GM12878 (cell line): ENCODE measurements at regions of chr1 and their contacts with region 1.

Region 1: GRCh38 chr1:25128121-25128621 is 104.1 kb downstream of the SYF2 start:
- DNase-seq: no peak
- ATAC-seq: peak; percentile 93
- H3K4me3 ChIP-seq: peak overlapping the region; percentile 5; the same call in 1 of the 2 replicates
- H3K27ac ChIP-seq: peak overlapping the region; percentile 35
- H3K4me1 ChIP-seq: peaks cover 16% of the 10 kb centered on the region
- H3K27me3 ChIP-seq: 0 out of 4 replicates have a peak, but pooled peaks cover 0 to 2% of the 10 kb centered on the region in 2 experiments
- CTCF ChIP-seq: no peak
- EP300 ChIP-seq: no peak
- POLR2A ChIP-seq: no peak
- RAD21 ChIP-seq: no peak

Region 2: GRCh38 chr1:25140073-25140797 is 12.1 kb after region 1 on chr1:
- CTCF ChIA-PET with region 1: interaction called, 6 read pairs
- POLR2A ChIA-PET with region 1: interaction called, 16 read pairs
- RAD21 ChIA-PET with region 1: interaction called, 11 read pairs
- SMC1A ChIA-PET with region 1: interaction called, 17 read pairs
- in situ Hi-C with region 1: no loop called
- intact Hi-C with region 1: no loop called
- DNase-seq: peak; percentile 69
- ATAC-seq: peak; percentile 97
- H3K4me3 ChIP-seq: no peak overlapping the region
- H3K27ac ChIP-seq: peak overlapping the region; percentile 11
- H3K4me1 ChIP-seq: peaks cover 26% of the 10 kb centered on the region
- H3K27me3 ChIP-seq: no peaks in the 10 kb centered on the region; a peak in 1 of 4 replicates
- CTCF ChIP-seq: no peak
- EP300 ChIP-seq: peak; percentile 51 to 79; a peak in 3 of 4 replicates
- POLR2A ChIP-seq: no peak
- RAD21 ChIP-seq: no peak; the same call in 1 of the 2 replicates

Region 3: GRCh38 chr1:25148673-25149300 is 20.6 kb after region 1 on chr1:
- CTCF ChIA-PET with region 1: interaction called, 17 read pairs
- POLR2A ChIA-PET with region 1: interaction called, 3 read pairs
- RAD21 ChIA-PET with region 1: interaction called, 5 read pairs
- SMC1A ChIA-PET with region 1: interaction called, 13 read pairs
- in situ Hi-C with region 1: no loop called
- intact Hi-C with region 1: no loop called
- DNase-seq: no peak
- ATAC-seq: peak; percentile 78
- H3K4me3 ChIP-seq: no peak overlapping the region
- H3K27ac ChIP-seq: no peak overlapping the region
- H3K4me1 ChIP-seq: peaks cover 12% of the 10 kb centered on the region
- H3K27me3 ChIP-seq: peaks cover 2 to 12% of the 10 kb centered on the region in 2 experiments
- CTCF ChIP-seq: peak; percentile 61 to 81 (median 67)
- EP300 ChIP-seq: no peak
- POLR2A ChIP-seq: no peak
- RAD21 ChIP-seq: peak; percentile 82

Region 4: DNA sequence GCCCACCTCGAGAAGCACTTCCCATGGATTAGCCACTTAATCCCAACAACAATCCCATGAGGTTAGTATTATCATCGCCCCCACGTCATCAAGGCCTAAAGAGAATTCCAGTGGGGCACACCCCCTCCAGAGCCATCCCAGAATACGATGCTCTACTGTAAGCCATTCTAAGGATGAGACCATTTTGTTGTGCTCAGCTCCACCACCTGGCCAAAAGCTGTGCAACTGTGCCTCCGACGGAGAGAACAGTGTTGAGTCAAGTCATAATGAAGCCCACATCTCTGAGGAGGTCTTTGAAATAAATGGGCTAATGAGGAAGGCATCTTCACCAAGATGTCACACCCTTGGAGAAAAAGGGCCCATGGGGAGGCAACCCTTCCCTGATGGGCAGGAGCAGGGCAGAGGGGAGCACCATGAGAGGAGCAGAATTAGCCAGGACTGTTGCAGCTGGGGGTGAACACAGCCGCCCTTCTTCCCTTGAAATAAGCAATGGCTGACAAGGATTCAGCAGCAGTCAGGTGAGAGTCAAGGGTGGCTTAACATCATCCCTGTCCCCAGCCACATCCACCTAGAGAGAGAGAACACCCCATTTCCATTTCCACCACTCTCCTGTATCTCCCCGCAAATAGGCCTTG is 89.5 kb after region 1 on chr1:
- CTCF ChIA-PET with region 1: no interaction called
- POLR2A ChIA-PET with region 1: no interaction called
- RAD21 ChIA-PET with region 1: no interaction called
- SMC1A ChIA-PET with region 1: no interaction called
- in situ Hi-C with region 1: no loop called
- intact Hi-C with region 1: no loop called
- DNase-seq: no peak
- ATAC-seq: no peak
- H3K4me3 ChIP-seq: no peak overlapping the region
- H3K27ac ChIP-seq: no peak overlapping the region
- H3K4me1 ChIP-seq: no peaks in the 10 kb centered on the region
- H3K27me3 ChIP-seq: no peaks in the 10 kb centered on the region
- CTCF ChIP-seq: no peak
- EP300 ChIP-seq: no peak
- POLR2A ChIP-seq: no peak
- RAD21 ChIP-seq: 0 out of 2 replicates have a peak, but pooled peaks have one; percentile 13

Region 5: DNA sequence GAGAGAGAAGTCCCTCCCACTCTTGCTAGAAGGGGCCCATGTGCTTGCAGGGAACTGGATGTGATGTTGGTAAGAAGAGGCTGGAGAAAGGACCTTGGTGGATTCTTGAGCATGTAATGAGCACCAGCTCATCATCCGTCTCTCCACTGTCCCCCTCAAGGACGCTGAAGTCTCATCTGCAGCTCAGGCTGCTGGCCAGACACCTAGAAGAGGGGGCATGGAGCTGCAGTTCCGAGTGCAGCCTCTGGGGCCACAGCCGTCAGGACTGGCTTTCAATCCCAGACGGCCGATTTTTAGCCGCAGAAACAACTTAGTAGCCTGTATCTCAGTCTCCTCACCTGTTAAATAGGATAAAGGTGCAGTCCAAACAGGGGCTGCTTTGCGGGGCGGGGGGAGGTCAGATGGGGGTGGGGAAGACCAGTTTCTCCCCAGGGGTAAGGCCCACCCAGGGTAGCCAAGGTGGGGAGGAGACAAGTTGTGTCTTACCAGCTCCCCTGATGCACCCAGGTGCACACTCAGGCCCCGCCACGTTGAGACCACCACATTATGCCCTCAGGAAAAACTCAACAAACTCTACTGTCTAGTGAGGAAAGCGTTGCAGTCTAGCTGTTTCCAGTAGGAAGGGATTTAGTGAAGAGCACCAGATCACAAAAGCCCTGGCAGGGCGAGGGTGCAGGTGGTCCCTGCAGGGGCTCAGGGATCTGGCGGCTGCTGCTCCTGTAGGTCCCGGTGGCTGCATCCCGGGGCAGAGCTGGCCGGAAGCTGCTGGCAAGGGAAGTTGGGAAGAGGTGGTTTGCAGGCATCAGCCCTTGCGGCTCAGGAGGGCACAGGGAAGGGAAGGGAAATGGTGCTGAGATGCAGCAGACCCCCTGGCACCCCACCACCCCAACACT is 444.8 kb after region 1 on chr1:
- CTCF ChIA-PET with region 1: no interaction called
- POLR2A ChIA-PET with region 1: no interaction called
- RAD21 ChIA-PET with region 1: no interaction called
- SMC1A ChIA-PET with region 1: no interaction called
- in situ Hi-C with region 1: no loop called
- intact Hi-C with region 1: no loop called
- DNase-seq: no peak
- ATAC-seq: peak; percentile 95
- H3K4me3 ChIP-seq: no peak overlapping the region
- H3K27ac ChIP-seq: no peak overlapping the region
- H3K4me1 ChIP-seq: no peaks in the 10 kb centered on the region
- H3K27me3 ChIP-seq: no peaks in the 10 kb centered on the region
- CTCF ChIP-seq: peak; percentile 42 to 85 (median 65)
- EP300 ChIP-seq: no peak
- POLR2A ChIP-seq: no peak
- RAD21 ChIP-seq: peak; percentile 51